ENCODE measurements at regions of chr5 and their contacts with region 1.

Region 1: GRCh38 chr5:110757118-110757729 is 18.4 kb downstream of the SLC25A46 start:
- DNase-seq: no peak
- H3K4me3 ChIP-seq: no peak overlapping the region
- H3K27ac ChIP-seq: no peak overlapping the region
- H3K27me3 ChIP-seq: no peaks in the 10 kb centered on the region
- CTCF ChIP-seq: peak; percentile 65

Region 2: GRCh38 chr5:110769000-110769681 is 11.9 kb after region 1 on chr5:
- CTCF ChIA-PET with region 1: interaction called, 12 read pairs
- POLR2A ChIA-PET with region 1: no interaction called
- DNase-seq: peak; percentile 65
- H3K4me3 ChIP-seq: no peak overlapping the region
- H3K27ac ChIP-seq: peak overlapping the region; percentile 54
- H3K27me3 ChIP-seq: no peaks in the 10 kb centered on the region
- CTCF ChIP-seq: no peak

Region 3: DNA sequence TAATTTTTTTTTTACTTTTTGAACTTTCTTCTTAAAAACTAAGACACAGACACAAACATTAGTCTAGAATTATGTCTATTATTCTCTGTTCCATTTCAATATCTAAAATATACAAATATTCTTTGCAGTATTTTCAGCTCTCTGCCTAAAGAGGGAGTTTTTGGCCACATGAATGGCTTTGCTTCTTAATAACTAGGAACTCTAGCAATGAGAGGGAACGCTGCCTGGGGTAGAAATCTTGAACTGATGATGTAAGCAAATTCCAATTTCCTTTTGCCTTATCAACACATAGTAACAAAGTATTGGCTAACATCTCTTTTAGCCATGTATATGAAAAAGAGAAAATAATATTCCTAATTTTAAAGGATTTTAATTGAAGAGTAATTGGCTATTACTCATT is 33.4 kb after region 1 on chr5:
- CTCF ChIA-PET with region 1: no interaction called
- POLR2A ChIA-PET with region 1: no interaction called
- DNase-seq: peak; percentile 62
- H3K4me3 ChIP-seq: no peak overlapping the region
- H3K27ac ChIP-seq: no peak overlapping the region
- H3K27me3 ChIP-seq: no peaks in the 10 kb centered on the region
- CTCF ChIP-seq: peak; percentile 63

Region 4: DNA sequence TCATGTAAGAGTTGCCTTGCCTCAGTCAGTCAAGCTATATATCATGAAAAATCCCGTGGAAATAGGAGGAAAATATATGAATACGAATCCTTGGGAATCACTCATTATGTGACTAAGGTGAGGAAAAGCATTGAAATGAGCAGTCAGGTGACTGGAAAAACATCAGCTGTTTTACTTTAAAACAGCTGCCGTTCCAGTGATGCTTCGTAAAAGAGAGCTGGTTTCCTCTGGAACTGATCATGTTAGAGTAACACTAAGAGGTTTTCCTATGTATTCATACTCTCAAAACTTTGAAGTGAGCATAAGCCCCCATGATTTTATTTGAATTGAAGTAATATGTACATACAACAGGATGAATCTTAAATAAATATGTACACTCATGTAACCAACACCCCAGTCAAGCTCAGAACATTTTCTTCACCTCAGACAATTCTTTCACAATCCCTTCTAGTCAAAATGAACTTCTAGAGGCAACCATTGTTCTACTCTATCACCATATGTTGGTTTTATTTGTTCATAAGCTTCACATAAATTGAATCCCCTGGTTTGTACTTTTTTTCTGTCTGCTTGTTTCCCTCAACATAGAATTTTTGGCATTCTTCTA is 89.3 kb after region 1 on chr5:
- CTCF ChIA-PET with region 1: no interaction called
- POLR2A ChIA-PET with region 1: no interaction called
- DNase-seq: no peak
- H3K4me3 ChIP-seq: no peak overlapping the region
- H3K27ac ChIP-seq: no peak overlapping the region
- H3K27me3 ChIP-seq: no peaks in the 10 kb centered on the region
- CTCF ChIP-seq: no peak

Region 5: DNA sequence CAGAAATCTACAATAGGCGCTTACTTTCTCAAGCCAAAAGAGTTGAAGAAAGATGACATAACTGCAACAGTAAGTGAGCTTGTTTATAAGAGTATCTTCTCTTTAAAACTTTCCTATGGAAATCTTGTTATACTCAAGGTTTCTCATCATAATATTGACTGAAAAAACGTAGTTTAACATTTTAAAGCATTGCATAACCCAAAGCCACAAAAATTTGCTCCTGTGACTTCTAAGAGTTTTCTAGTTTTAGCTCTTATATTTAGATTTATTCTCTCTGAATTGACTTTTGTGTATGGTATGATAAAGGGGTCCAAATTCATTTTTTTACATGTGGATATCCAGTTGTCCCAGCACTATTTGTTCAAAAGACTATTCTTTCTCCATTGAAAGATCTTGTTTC is 350.1 kb after region 1 on chr5:
- CTCF ChIA-PET with region 1: interaction called, 11 read pairs
- POLR2A ChIA-PET with region 1: no interaction called
- DNase-seq: no peak
- H3K4me3 ChIP-seq: no peak overlapping the region
- H3K27ac ChIP-seq: no peak overlapping the region
- H3K27me3 ChIP-seq: no peaks in the 10 kb centered on the region
- CTCF ChIP-seq: no peak

Measured in AG04450 (cell line).